Activated CD4-positive, alpha-beta T cell treated with anti-CD3 and anti-CD28 coated beads, Interleukin-2, amount 10 ng/mL, durations not matched to agents 24 days and 14 days (primary cell): ENCODE measurements at regions of chr19 and their contacts with region 1.

Region 1: DNA sequence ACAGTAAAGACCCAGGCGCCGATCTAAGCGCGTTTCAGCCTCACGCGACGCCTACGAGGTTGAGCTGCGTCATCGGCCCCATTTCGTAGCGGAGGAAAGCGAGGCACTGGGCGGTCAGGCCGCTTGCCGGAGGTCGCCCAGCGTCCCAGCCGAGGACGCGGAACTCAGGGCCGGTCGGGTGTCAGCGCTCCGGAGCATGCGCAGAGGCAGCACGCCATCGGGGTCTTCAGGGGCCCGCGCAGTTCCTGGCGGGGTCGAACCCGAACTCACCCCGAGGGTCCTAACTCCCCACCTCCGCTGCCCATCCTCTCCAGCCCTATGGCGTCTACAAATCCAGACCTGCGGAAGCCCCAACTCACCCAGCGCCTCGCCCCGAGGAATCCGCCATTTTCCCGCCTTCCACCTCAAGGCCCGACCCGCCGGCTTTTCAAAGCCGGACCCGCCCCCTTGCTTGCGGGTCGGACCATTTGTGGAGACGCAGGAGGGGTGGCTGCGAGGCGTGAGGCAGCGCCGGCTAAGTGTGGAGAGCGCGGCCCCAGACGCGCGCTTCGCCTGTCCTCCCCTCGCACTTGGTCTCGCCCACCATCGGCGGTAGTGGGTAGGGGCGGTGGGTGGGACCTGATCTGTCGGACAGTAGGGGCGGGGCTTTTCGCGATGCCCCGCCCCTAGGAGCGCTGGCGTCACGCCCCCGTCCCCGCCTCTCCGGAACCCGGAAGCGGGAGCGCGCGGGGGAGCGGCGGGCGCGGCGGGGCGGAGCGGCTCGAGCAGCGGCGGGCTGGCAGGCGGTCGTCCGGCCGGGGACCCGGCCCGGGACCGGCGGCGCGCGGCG is at the starts of genes HAUS8 and MYO9B:
- DNase-seq: peak; percentile 100
- H3K4me3 Mint-ChIP-seq: peak within 1 kb of the TSS; percentile 100
- H3K27ac Mint-ChIP-seq: peak within 1 kb of the TSS; percentile 99
- H3K4me1 Mint-ChIP-seq: peaks cover 51% of the 10 kb centered on the region
- H3K27me3 Mint-ChIP-seq: no peaks in the 10 kb centered on the region
- total RNA-seq, gene HAUS8: 32.5 and 35.0 TPM in 2 replicates
- total RNA-seq, gene MYO9B: 120 TPM in 2 replicates

Region 2: DNA sequence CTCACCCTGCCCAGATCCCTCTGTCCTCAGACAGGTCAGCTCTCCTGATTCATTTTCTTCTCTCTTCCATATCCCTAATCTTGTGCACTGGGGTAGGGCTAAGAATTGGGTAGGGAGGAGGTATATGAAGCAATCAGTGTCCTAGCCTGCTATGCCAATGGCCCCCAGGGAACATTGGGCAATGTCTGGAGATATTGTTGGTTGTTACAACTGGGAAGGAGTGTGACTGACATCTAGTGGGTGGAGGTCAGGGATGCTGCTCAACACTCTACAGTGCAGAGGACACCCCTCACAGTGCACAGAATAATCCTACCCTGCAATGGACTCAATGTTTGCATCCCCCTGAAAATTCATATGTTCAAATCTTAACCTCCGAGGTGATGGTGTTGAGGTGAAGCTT is 106.1 kb before region 1 on chr19:
- intact Hi-C with region 1: no loop called
- DNase-seq: no peak
- H3K4me3 Mint-ChIP-seq: no peak overlapping the region
- H3K27ac Mint-ChIP-seq: no peak overlapping the region
- H3K4me1 Mint-ChIP-seq: no peaks in the 10 kb centered on the region
- H3K27me3 Mint-ChIP-seq: no peaks in the 10 kb centered on the region

Region 3: GRCh38 chr19:17020823-17021222 is 54.4 kb before region 1 on chr19:
- intact Hi-C with region 1: no loop called
- DNase-seq: no peak
- H3K4me3 Mint-ChIP-seq: no peak overlapping the region
- H3K27ac Mint-ChIP-seq: no peak overlapping the region
- H3K4me1 Mint-ChIP-seq: peaks cover under 1% of the 10 kb centered on the region
- H3K27me3 Mint-ChIP-seq: peaks cover 20% of the 10 kb centered on the region

Region 4: GRCh38 chr19:17125715-17126677 is 50.7 kb after region 1 on chr19:
- intact Hi-C with region 1: loop called (anchors 1 kb)
- DNase-seq: peak; percentile 94
- H3K4me3 Mint-ChIP-seq: peak overlapping the region; percentile 87
- H3K27ac Mint-ChIP-seq: peak overlapping the region; percentile 99
- H3K4me1 Mint-ChIP-seq: peaks cover 46% of the 10 kb centered on the region
- H3K27me3 Mint-ChIP-seq: no peaks in the 10 kb centered on the region

Region 5: DNA sequence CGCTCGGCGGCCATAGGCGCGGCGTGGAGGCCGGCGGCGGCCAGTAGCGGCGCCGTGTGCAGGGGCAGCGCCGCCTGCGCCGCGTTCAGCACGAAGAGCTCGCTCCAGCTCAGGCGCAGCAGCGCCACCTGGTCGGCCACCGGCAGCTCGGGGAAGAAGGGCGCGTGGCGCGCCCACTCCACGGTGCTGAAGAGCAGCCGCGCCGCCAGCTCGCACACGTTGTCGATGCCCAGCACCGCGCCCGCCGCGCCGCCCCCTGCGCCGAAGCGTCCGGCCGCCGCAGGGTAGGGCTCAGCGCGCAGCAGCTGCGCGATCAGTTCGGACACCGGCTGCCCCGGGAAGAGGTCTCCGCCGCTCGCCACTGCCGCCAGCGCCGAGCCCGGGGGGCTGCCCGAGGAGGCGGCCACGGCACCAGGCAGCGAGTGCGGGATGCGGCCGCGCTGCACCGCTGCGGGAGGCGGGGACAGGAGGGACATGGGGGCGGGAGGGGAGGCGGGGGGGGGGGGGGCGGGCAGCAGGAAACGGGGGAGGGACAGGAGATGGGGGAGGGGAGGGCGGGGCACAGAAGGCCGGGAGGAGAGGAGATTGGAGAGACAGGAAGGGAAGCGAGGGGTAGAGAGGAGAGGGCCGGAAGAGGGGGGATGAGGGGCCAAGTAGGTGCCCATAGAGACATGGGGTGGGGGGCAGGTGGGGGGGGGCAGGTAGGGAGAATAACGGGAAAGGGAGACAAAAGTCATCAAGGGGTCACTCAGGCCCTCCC is 160.5 kb after region 1 on chr19:
- intact Hi-C with region 1: loop called (anchors 2 kb)
- DNase-seq: peak; percentile 93
- H3K4me3 Mint-ChIP-seq: peak overlapping the region; percentile 84
- H3K27ac Mint-ChIP-seq: peak overlapping the region; percentile 86
- H3K4me1 Mint-ChIP-seq: peaks cover 5% of the 10 kb centered on the region
- H3K27me3 Mint-ChIP-seq: no peaks in the 10 kb centered on the region

Region 6: DNA sequence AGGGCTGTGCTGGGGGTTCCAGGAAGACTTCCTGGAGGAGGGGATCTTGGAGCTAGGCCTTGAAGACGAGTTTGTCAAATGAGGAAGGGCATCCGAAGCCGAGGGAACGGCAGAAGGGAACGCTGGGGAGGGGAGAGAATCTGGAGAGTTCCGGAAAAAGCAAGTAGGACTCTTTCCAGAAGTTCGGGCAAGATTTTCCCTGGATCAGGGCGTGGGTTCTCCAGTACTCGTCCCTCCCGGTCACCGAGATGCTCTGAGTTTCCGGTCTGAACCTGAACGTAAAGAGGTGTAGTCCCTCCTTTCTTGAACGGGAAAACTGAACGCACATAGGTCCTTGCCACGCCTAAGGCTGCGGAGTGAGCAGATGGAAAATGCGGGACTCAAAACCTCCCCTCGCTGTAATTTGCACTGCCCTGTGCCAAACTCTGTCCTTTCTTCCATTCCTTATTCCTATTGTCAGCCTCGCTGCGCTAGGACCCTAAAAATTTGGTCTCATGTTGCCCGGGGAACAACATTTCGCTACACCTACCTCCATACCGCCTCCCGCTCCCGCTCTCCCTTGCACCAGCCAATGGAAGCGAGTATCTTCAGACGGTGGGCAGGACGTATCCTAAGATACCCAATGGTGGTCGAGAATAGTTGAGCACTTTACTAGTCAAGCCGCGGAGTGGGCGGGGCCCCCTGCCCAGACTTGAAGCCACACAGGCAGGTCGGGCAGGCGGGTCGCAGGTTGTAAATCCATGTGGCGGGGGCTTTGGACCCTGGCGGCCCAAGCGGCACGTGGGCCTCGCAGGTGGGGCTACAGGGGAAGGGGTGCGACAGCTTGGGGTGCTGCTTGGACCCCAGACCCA is 261.8 kb after region 1 on chr19 and contains the start of gene GTPBP3:
- intact Hi-C with region 1: loop called (anchors 1 kb)
- DNase-seq: peak; percentile 99
- H3K4me3 Mint-ChIP-seq: peak within 1 kb of the TSS; percentile 99
- H3K27ac Mint-ChIP-seq: peak within 1 kb of the TSS; percentile 94
- H3K4me1 Mint-ChIP-seq: peaks cover 30% of the 10 kb centered on the region
- H3K27me3 Mint-ChIP-seq: no peaks in the 10 kb centered on the region
- total RNA-seq, gene GTPBP3: 69.9 and 70.3 TPM in 2 replicates

Region 7: GRCh38 chr19:17766543-17767131 is 691.4 kb after region 1 on chr19:
- intact Hi-C with region 1: no loop called
- DNase-seq: peak; percentile 88
- H3K4me3 Mint-ChIP-seq: no peak overlapping the region
- H3K27ac Mint-ChIP-seq: no peak overlapping the region
- H3K4me1 Mint-ChIP-seq: peaks cover 9% of the 10 kb centered on the region
- H3K27me3 Mint-ChIP-seq: no peaks in the 10 kb centered on the region